T-cell (primary cell): ENCODE measurements at regions of chr5 and their contacts with region 1.

Region 1: DNA sequence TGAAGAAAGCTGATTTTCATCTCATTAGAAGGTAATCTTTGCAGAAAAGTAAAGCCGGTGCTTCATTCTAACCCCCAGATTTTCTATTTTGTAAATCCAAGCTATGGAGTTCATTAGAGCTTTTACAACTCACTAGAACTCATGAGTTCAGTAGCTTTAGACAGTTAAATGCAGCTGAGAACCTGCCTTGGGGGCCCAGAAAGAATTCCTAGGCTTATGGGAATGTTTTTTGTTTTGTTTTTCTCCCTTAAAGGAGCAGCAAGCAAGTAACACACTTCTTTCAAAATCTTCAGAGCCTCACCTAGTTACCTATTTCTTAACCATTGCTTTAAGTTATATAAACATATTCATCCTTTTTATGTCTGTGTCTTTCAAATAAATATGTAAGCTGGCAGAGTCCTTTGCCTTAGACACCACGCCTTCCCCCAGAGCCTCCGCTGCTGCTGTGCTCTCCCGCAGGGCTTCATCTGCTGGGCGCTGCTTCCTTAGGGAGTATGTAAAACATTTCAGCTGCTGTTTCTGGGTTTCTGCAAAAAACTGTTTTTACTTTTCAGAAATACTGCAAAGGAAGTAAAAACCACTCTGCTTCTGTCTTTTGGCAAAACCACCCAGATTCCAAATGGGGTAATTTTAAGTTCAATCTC is 132.9 kb downstream of the CDC42SE2 start:
- DNase-seq: no peak
- ATAC-seq: no peak
- H3K4me3 ChIP-seq: no peak overlapping the region
- H3K4me3 Mint-ChIP-seq: peak overlapping the region in 2 of 3 donors; percentile 42 to 60
- H3K27ac ChIP-seq: peak overlapping the region; percentile 95
- H3K27ac Mint-ChIP-seq: peak overlapping the region; percentile 88 to 92
- H3K4me1 ChIP-seq: peaks cover 29 to 33% of the 10 kb centered on the region in 2 experiments
- H3K4me1 Mint-ChIP-seq: peaks cover 70 to 77% (median 76%) of the 10 kb centered on the region in 3 donors
- H3K27me3 ChIP-seq: no peaks in the 10 kb centered on the region
- H3K27me3 Mint-ChIP-seq: no peaks in the 10 kb centered on the region

Region 2: GRCh38 chr5:130135506-130135905 is 1261.2 kb before region 1 on chr5:
- CTCF ChIA-PET with region 1: no interaction called
- POLR2A ChIA-PET with region 1: no interaction called
- DNase-seq: no peak
- ATAC-seq: no peak
- H3K4me3 ChIP-seq: no peak overlapping the region
- H3K4me3 Mint-ChIP-seq: no peak overlapping the region
- H3K27ac ChIP-seq: no peak overlapping the region
- H3K27ac Mint-ChIP-seq: no peak overlapping the region
- H3K4me1 ChIP-seq: no peaks in the 10 kb centered on the region
- H3K4me1 Mint-ChIP-seq: no peaks in the 10 kb centered on the region
- H3K27me3 ChIP-seq: peaks cover 0 to 2% of the 10 kb centered on the region in 2 experiments
- H3K27me3 Mint-ChIP-seq: peaks cover 2 to 8% of the 10 kb centered on the region in 2 donors

Region 3: DNA sequence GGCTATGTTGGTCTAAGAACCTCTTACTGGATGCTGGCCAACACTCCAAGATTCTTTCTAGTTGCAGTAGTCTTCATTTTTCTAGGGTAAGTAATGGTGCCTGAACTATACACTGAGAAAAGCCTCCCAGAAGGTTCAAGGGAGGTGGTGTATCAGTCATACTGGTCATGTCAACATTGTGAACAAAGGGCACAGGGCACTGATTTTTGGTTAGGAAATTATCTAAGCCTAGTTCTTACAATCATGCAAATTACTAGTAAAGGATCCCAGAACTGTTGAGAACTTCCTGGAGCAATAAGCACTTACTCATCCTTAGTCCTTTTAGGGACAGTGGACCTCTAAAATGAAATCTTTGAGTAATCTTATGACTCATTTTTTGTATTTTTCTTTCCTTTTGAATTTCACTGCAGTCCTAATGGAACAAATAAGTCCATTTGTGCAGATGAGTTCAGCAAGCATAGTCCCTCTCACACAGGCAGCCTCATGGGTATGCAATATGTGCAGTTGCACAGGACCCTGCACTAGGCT is 154.0 kb before region 1 on chr5:
- CTCF ChIA-PET with region 1: no interaction called
- POLR2A ChIA-PET with region 1: interaction called in 1 of 2 experiments, 11 read pairs
- DNase-seq: no peak
- ATAC-seq: no peak
- H3K4me3 ChIP-seq: no peak overlapping the region
- H3K4me3 Mint-ChIP-seq: no peak overlapping the region
- H3K27ac ChIP-seq: no peak overlapping the region
- H3K27ac Mint-ChIP-seq: no peak overlapping the region
- H3K4me1 ChIP-seq: no peaks in the 10 kb centered on the region
- H3K4me1 Mint-ChIP-seq: peaks cover 0 to 7% (median 0%) of the 10 kb centered on the region in 3 donors
- H3K27me3 ChIP-seq: no peaks in the 10 kb centered on the region
- H3K27me3 Mint-ChIP-seq: no peaks in the 10 kb centered on the region

Region 4: GRCh38 chr5:131357739-131358561 is 38.8 kb before region 1 on chr5:
- CTCF ChIA-PET with region 1: no interaction called
- POLR2A ChIA-PET with region 1: no interaction called
- DNase-seq: peak in 10 of 35 experiments; percentile 16 to 59 (median 34)
- ATAC-seq: peak; percentile 68 to 76 (median 71)
- H3K4me3 ChIP-seq: no peak overlapping the region
- H3K4me3 Mint-ChIP-seq: peak overlapping the region; percentile 3 to 57 (median 27)
- H3K27ac ChIP-seq: peak overlapping the region; percentile 66
- H3K27ac Mint-ChIP-seq: peak overlapping the region; percentile 81 to 90
- H3K4me1 ChIP-seq: peaks cover 30 to 33% of the 10 kb centered on the region in 2 experiments
- H3K4me1 Mint-ChIP-seq: peaks cover 75 to 81% (median 77%) of the 10 kb centered on the region in 3 donors
- H3K27me3 ChIP-seq: no peaks in the 10 kb centered on the region
- H3K27me3 Mint-ChIP-seq: no peaks in the 10 kb centered on the region

Region 5: DNA sequence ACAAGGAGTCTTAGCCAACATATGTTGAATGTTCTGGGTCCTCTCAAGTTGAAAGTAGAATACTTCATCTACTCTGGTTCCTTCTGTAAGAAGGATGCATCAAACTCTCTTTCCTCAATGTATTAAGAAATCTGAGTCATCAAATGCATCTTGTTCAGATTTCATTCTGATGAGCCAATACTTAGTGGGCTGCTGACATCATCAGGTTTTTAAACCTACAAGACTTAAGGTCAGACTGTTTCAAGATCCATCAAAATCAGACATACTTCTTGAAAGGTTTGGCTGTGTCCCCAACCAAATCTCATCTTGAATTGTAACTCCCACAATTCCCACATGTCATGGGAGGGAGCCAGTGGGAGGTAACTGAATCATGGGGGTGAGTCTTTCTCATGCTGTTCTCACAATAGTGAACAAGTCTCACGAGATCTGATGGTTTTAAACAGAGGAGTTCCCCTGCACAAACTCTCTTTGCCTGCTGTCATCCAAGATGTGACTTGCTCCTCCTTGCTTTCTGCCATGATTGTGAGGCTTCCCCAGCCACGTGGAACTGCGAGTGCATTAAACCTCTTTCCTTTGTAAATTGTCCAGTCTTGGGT is 69.5 kb after region 1 on chr5:
- CTCF ChIA-PET with region 1: no interaction called
- POLR2A ChIA-PET with region 1: no interaction called
- DNase-seq: no peak
- ATAC-seq: peak in 1 of 4 experiments; percentile 24
- H3K4me3 ChIP-seq: no peak overlapping the region
- H3K4me3 Mint-ChIP-seq: no peak overlapping the region
- H3K27ac ChIP-seq: no peak overlapping the region
- H3K27ac Mint-ChIP-seq: peak overlapping the region; percentile 69 to 74
- H3K4me1 ChIP-seq: peaks cover 0 to 17% of the 10 kb centered on the region in 2 experiments
- H3K4me1 Mint-ChIP-seq: peaks cover 49 to 70% (median 52%) of the 10 kb centered on the region in 3 donors
- H3K27me3 ChIP-seq: no peaks in the 10 kb centered on the region
- H3K27me3 Mint-ChIP-seq: no peaks in the 10 kb centered on the region